ENCODE measurements at regions of chr1 and their contacts with region 1.

Region 1: DNA sequence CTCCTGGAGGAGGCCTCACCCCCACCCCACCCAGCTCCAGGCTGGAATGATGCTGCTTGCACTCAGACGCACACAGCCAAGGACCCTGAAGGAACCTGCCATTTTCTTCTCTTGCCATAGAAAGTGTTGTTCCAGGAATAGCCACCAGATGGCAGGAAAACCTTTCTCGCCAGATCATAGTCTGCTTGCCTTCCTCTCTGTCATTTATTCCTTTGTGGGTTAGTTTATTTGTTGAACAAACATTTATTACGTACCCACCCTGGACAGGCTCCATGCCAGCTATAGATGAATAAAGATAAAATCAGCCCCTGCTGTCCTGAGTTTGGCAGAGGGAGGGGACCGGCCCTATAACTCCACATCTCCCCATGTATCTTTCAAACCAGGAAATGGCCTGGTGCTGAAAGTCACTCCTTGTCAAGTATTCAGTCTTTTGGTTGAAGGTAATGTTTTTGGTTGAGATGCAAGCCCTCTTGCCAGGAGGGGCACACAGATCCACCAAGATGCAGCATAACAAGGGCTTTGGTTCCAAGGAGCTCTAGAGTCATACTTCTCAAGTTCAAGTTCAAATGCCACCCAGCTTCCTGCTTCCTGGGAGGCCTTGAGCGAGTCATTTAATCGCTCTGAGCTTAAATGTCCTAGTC is 7.0 kb upstream of the KCNC4 start:
- H3K4me3 ChIP-seq: no peak overlapping the region
- H3K27ac ChIP-seq: no peak overlapping the region
- H3K4me1 ChIP-seq: no peaks in the 10 kb centered on the region
- CTCF ChIP-seq: peak; percentile 79

Region 2: GRCh38 chr1:110040548-110040947 is 162.6 kb before region 1 on chr1:
- CTCF ChIA-PET with region 1: no interaction called
- POLR2A ChIA-PET with region 1: no interaction called
- H3K4me3 ChIP-seq: no peak overlapping the region
- H3K27ac ChIP-seq: no peak overlapping the region
- H3K4me1 ChIP-seq: peaks cover 3% of the 10 kb centered on the region; the same call in 1 of the 2 replicates
- CTCF ChIP-seq: no peak

Region 3: DNA sequence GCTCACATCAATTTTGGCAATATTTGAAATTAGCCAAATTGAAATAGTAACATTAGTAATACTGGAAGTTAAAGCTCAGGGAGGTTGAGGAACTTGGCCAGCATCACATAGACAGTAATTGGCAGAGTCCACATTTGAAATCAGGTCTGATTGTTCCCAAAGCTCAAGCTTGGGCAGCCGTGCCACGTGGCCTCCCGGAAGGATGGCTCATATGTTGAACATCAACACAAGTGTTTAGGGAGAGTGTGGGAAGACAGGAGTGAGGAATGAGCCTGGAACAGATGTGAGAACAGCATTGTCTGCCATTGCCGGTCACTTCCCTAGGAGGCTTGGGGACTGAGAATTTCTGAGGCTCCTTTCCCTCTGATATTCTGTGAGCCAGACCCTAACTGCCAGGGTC is 95.8 kb after region 1 on chr1:
- CTCF ChIA-PET with region 1: interaction called, 24 read pairs
- POLR2A ChIA-PET with region 1: no interaction called
- H3K4me3 ChIP-seq: no peak overlapping the region
- H3K27ac ChIP-seq: no peak overlapping the region
- H3K4me1 ChIP-seq: no peaks in the 10 kb centered on the region
- CTCF ChIP-seq: no peak

Region 4: DNA sequence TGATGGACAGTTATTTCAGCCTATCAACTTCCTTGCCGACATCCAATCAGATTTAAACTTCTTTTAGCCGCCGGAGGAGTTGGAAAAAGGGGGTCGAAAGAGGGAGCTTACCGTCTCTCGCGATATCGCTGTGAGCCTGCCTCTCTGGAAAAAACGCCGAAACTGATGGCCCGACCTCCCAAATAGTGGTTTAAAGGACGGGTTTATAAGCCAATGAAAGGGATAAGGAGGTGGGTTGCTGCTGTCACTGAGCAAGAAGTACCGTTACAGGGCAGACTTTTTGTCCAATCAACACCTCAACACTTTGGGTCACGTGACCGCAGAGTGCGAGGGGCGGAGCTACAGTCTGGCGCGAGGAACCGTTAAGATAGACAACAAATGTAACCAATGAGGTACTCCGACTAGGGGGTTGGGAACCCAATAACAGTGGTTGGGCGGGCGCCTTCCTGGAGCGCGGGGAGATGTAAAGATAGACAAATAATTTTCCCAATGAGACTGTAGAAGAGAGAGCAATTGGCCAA is 135.8 kb after region 1 on chr1 and contains the start of gene RBM15:
- CTCF ChIA-PET with region 1: interaction called, 57 read pairs
- POLR2A ChIA-PET with region 1: interaction called, 26 read pairs
- H3K4me3 ChIP-seq: peak within 1 kb of the TSS; percentile 78
- H3K27ac ChIP-seq: peak within 1 kb of the TSS; percentile 88
- H3K4me1 ChIP-seq: peaks cover 13% of the 10 kb centered on the region
- CTCF ChIP-seq: no peak

Region 5: DNA sequence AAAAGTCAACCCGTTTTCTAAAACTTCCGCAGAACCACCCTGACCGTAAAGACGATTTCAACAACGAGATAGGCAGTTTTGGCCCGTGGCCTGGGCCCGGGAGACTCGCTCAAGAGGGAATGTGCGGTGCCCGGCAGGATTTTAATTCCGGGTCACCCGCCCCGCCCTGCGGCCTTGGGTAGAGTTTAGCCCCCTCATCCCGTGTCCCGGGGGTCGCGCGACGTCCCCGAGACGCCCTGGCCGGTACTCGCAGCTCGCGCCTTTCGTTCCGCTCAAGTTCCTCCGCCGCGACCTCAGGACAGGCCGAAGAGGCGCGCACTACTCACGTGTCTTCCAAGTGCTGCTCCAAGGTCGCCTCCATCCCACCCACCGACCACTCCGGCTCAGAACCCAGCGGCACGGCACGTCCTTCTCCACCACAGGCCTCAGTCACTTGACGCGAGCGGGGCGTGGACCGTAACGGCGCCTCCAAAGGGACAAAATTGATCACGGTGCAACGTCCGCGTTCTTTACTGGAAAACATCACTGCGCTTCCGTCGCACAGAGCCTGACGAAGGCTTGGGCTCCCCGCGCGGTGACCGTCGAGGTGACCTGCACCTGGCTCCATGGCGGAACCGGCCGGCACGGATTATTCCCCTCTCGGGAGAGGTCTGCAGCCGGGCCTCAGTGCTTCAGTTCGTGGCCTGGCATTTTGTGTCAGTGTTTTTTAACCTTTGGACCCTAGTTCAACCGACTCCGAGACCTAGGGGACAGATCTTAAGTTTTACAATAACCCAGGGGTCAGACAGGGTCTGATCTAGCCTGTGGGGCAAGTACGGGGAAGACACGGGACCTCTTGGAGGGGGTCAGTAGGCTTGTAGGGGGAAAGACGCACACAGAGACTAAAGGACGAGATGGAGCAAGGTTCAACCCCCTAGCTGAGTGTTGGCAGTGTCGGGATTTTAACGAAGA is 204.4 kb after region 1 on chr1 and contains the start of gene LAMTOR5:
- CTCF ChIA-PET with region 1: interaction called, 14 read pairs
- POLR2A ChIA-PET with region 1: no interaction called
- H3K4me3 ChIP-seq: peak within 1 kb of the TSS; percentile 98
- H3K27ac ChIP-seq: peak within 1 kb of the TSS; percentile 68
- H3K4me1 ChIP-seq: no peaks in the 10 kb centered on the region
- CTCF ChIP-seq: peak; percentile 57; the same call in 1 of the 2 replicates

Region 6: GRCh38 chr1:110412576-110412975 is 209.4 kb after region 1 on chr1:
- CTCF ChIA-PET with region 1: interaction called, 14 read pairs
- POLR2A ChIA-PET with region 1: no interaction called
- H3K4me3 ChIP-seq: no peak overlapping the region
- H3K27ac ChIP-seq: no peak overlapping the region
- H3K4me1 ChIP-seq: no peaks in the 10 kb centered on the region
- CTCF ChIP-seq: peak; percentile 66

Region 7: GRCh38 chr1:110449661-110450651 is 246.8 kb after region 1 on chr1:
- CTCF ChIA-PET with region 1: interaction called, 16 read pairs
- POLR2A ChIA-PET with region 1: no interaction called
- H3K4me3 ChIP-seq: no peak overlapping the region
- H3K27ac ChIP-seq: no peak overlapping the region
- H3K4me1 ChIP-seq: no peaks in the 10 kb centered on the region
- CTCF ChIP-seq: no peak

Region 8: DNA sequence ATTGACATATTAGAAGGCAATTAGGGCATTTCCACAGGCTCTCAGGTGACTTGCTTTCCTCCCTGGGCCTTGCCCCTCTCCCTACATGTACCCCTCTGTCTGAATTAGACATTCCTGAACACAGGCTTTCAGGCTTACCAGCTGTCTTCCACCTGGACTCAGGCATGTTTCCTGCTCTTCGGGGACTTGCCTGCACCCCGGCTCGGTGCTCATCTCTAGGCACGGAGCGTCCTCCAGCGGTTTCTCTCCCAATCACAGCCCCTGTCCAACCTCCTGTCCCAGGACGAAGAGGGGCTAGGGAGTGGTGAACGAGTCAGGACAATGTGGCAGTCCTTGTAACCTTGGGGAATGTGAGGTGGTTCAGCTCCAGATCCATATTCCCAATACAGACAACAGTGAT is 252.0 kb after region 1 on chr1:
- CTCF ChIA-PET with region 1: interaction called, 357 read pairs
- POLR2A ChIA-PET with region 1: interaction called, 4 read pairs
- H3K4me3 ChIP-seq: no peak overlapping the region
- H3K27ac ChIP-seq: no peak overlapping the region
- H3K4me1 ChIP-seq: no peaks in the 10 kb centered on the region
- CTCF ChIP-seq: no peak